Activated CD4-positive, alpha-beta T cell treated with anti-CD3 and anti-CD28 coated beads for 36 hours (primary cell): ENCODE measurements at regions of chr19 and their contacts with region 1.

Region 1: DNA sequence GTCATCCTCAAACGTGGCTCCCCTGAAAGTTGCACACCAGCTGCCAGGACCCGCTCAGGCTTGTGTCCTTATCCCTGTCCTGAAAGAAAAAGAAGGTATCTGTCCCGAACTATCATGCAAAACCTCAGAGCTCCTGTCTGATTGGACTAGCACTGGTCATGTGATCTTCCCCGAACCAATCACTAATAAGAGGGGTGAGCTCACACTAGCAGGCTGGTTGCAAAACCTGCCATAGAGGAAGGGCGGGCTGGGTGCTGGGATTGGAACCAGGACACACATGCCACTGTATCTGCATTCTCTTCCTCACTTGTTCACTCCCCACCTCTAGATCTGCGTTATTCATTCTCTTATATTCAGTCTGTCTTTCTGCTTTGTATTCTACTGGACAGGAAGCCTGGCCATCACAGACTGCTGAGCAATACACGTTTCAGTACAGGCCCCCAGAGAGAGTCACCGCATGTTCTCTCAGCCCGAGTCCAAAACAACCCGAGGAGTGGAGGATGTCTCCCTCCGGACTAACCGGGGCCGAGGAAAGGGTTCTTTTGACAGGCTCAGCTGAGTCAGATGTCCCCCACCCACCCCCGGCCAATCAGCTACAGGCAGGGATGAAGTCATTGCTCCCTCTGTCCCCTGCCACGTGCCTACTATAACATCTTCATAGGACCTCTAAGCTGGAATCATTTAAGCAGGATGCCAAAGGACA is 97.7 kb downstream of the SIPA1L3 start:
- DNase-seq: peak; percentile 41
- ATAC-seq: peak; percentile 51
- H3K4me3 Mint-ChIP-seq: no peak overlapping the region
- H3K27ac Mint-ChIP-seq: no peak overlapping the region
- H3K4me1 Mint-ChIP-seq: peaks cover 7% of the 10 kb centered on the region
- H3K27me3 Mint-ChIP-seq: no peaks in the 10 kb centered on the region

Region 2: DNA sequence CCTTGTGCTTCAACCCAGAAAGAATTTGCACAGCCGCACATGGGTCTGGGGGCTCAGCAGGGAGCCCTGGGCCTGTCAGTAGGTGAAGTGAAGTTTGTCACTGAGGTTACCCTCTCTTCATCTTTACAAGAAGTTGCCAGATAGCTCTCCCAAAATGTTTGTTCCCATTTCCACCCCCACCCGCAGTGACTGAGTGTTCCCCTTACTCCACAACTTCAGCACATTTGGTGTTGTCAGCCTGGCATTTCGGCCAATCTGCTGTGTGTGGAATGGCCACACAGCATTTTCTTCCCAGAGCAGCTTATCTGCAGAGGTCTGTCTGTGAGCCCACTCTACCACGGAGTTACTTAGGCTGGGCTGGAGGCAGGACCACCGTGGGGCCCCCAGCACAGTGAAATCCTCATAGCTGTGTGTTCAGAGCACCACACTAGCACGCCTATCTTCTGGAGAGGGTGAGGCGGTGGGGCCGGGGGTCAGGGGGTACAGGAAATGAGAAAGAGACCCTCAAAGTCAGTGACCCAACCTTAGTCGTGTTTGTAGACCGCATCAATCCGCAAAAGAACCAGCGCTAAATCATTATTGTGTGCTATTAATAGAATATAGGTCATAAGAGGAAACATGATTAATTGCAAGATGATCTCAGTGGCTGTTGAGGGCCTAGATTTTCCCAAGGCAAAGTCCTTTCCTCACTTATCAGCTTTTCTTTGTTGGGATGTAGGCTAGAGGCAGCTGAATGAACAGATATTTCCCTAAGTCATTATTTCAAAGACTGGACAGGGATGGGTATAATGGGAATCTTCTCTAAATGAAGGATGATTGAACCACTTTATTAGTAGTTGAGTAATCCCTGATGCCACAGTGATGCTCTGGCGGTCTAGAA is 18.4 kb after region 1 on chr19:
- CTCF ChIA-PET with region 1: no interaction called
- POLR2A ChIA-PET with region 1: no interaction called
- intact Hi-C with region 1: no loop called
- DNase-seq: no peak
- ATAC-seq: no peak
- H3K4me3 Mint-ChIP-seq: no peak overlapping the region
- H3K27ac Mint-ChIP-seq: no peak overlapping the region
- H3K4me1 Mint-ChIP-seq: no peaks in the 10 kb centered on the region
- H3K27me3 Mint-ChIP-seq: no peaks in the 10 kb centered on the region

Region 3: GRCh38 chr19:38213911-38214625 is 209.4 kb after region 1 on chr19:
- CTCF ChIA-PET with region 1: no interaction called
- POLR2A ChIA-PET with region 1: no interaction called
- intact Hi-C with region 1: loop called in 1 of 2 experiments (anchors 5 kb)
- DNase-seq: peak; percentile 90
- ATAC-seq: peak; percentile 95
- H3K4me3 Mint-ChIP-seq: peak overlapping the region; percentile 67
- H3K27ac Mint-ChIP-seq: peak overlapping the region; percentile 78
- H3K4me1 Mint-ChIP-seq: peaks cover 24% of the 10 kb centered on the region
- H3K27me3 Mint-ChIP-seq: peaks cover 51% of the 10 kb centered on the region